PC-3 (cell line): ENCODE measurements at regions of chr2 and their contacts with region 1.

Region 1: DNA sequence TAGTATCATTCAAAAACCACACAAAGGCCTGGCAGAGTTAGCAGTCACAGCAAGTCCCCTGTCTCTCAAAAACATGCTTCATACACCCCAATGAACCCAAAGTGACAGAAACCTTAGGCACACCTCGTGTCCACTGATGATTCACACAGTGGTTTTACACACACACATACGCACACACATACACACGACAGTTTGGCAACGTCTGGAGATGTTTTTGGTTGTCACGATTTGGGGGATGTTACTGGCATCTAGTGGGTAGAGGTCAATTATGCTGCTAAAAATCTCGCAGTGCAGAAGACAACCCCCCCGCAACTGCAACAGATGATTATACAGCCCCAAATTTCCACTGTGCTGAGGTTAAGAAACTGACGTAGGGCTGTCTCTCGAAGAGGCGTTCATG is 72.9 kb upstream of the PARD3B start:
- DNase-seq: no peak
- ATAC-seq: no peak
- H3K4me3 ChIP-seq: no peak overlapping the region
- H3K27ac ChIP-seq: no peak overlapping the region
- H3K4me1 ChIP-seq: peaks cover 16% of the 10 kb centered on the region
- H3K27me3 ChIP-seq: no peaks in the 10 kb centered on the region
- CTCF ChIP-seq: no peak

Region 2: GRCh38 chr2:204452464-204453023 is 19.8 kb before region 1 on chr2:
- CTCF ChIA-PET with region 1: no interaction called
- POLR2A ChIA-PET with region 1: no interaction called
- intact Hi-C with region 1: loop called (anchors 2 kb)
- DNase-seq: peak; percentile 96
- ATAC-seq: peak; percentile 97
- H3K4me3 ChIP-seq: peak overlapping the region; percentile 5; the same call in 1 of the 2 replicates
- H3K27ac ChIP-seq: peak overlapping the region; percentile 81
- H3K4me1 ChIP-seq: peaks cover 22% of the 10 kb centered on the region
- H3K27me3 ChIP-seq: no peaks in the 10 kb centered on the region
- CTCF ChIP-seq: no peak